H1 (cell line): ENCODE measurements at regions of chr3 and their contacts with region 1.

Region 1: DNA sequence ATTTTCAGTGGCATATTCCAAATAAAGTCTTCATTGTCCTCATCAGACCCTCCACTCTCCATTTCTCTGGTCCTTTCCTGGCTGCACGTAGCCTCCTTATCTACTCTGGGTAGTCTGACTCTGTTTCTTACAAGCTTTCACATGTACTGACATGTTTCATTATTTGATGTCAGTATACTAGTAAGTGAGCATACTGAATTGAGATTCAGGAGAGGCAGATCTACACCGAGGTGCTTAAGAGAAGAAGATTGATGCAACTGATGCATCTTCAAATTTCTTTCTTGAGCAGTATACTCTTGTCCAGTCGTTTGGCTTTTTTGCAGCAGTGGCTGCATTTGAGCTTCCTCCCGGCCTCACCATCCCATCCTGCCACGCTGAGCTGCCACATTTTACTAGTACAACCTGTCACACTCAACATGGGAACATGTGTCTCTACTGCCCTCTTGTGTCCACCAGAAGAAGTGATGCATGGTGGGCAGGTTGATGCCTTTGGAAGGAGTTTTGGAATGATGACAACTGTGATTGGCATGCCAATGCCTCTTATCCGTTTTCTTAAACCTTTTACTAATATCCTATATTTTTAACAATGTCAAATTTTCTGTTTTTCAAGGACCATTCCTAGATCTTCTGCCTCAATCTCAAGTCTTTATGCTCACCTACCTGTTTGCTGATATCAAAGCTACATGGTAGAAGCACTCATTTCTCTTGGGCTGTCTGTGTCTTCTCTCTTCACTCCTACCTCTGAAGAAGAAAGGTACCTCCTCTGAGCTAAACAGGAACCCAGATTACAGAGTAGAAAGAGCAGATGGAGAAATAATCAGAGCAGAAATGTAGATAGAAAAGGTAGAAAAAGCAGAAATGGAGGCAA is 38.7 kb downstream of the GUCA1C start:
- DNase-seq: peak; percentile 21 to 63
- H3K4me3 ChIP-seq: no peak overlapping the region
- H3K27ac ChIP-seq: no peak overlapping the region
- H3K4me1 ChIP-seq: no peaks in the 10 kb centered on the region
- H3K27me3 ChIP-seq: no peaks in the 10 kb centered on the region
- CTCF ChIP-seq: peak; percentile 65 to 97 (median 88)
- EP300 ChIP-seq: no peak
- POLR2A ChIP-seq: no peak
- RAD21 ChIP-seq: peak; percentile 97

Region 2: GRCh38 chr3:108662130-108662738 is 252.8 kb before region 1 on chr3:
- CTCF ChIA-PET with region 1: interaction called, 23 read pairs
- POLR2A ChIA-PET with region 1: no interaction called
- DNase-seq: no peak
- H3K4me3 ChIP-seq: no peak overlapping the region
- H3K27ac ChIP-seq: no peak overlapping the region
- H3K4me1 ChIP-seq: peaks cover 0 to 2% (median 0%) of the 10 kb centered on the region in 4 experiments; a peak in 2 of 7 replicates
- H3K27me3 ChIP-seq: no peaks in the 10 kb centered on the region
- CTCF ChIP-seq: peak in 2 of 3 experiments; percentile 61 to 65; a peak in 3 of 4 replicates
- EP300 ChIP-seq: no peak
- POLR2A ChIP-seq: no peak
- RAD21 ChIP-seq: peak; percentile 83 to 87

Region 3: DNA sequence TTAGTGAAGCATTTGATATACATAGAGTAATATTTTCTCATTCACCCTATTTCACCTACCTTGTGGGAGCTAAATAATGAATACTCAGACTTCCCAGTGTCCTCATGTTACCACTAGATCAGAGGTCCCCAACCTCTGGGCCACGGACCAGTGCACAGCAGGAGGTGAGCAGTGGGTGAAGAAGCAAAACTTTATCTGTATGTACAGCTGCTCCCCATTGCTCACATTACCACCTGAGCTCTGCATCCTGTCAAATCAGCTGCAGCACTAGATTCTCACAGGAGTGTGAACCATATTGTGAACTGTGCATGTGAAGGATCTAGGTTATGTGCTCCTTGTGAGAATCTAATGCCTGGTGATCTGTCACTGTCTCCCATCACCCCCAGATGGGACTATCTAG is 237.2 kb before region 1 on chr3:
- CTCF ChIA-PET with region 1: interaction called, 11 read pairs
- POLR2A ChIA-PET with region 1: no interaction called
- DNase-seq: no peak
- H3K4me3 ChIP-seq: no peak overlapping the region
- H3K27ac ChIP-seq: no peak overlapping the region
- H3K4me1 ChIP-seq: no peaks in the 10 kb centered on the region
- H3K27me3 ChIP-seq: no peaks in the 10 kb centered on the region
- CTCF ChIP-seq: no peak
- EP300 ChIP-seq: no peak
- POLR2A ChIP-seq: no peak
- RAD21 ChIP-seq: no peak

Region 4: GRCh38 chr3:108818404-108818803 is 96.6 kb before region 1 on chr3:
- CTCF ChIA-PET with region 1: interaction called, 12 read pairs
- POLR2A ChIA-PET with region 1: no interaction called
- DNase-seq: peak in 1 of 2 experiments; percentile 34
- H3K4me3 ChIP-seq: no peak overlapping the region
- H3K27ac ChIP-seq: no peak overlapping the region
- H3K4me1 ChIP-seq: no peaks in the 10 kb centered on the region
- H3K27me3 ChIP-seq: no peaks in the 10 kb centered on the region
- CTCF ChIP-seq: peak; percentile 30 to 81 (median 65); a peak in 3 of 4 replicates
- EP300 ChIP-seq: no peak
- POLR2A ChIP-seq: no peak
- RAD21 ChIP-seq: peak; percentile 84 to 89

Region 5: DNA sequence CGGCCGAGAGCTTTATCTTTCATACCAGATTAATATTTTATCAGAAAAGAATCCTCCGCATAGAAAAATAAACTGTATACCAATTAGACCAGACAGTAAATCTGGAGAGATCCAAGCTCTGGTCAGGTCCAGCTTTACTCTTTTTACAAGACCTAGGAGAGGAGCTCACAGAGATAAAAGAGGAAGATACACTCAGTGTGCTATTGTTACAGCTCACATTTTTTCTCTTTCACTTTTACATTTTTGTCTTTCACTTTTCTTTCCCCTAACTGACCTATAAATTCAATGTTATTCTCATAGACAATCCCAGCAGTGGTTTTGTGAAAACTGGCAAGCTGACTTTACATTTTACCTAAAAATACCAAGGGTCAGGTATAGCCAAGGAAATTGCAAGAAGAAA is 17.1 kb before region 1 on chr3:
- CTCF ChIA-PET with region 1: interaction called, 12 read pairs
- POLR2A ChIA-PET with region 1: no interaction called
- DNase-seq: no peak
- H3K4me3 ChIP-seq: no peak overlapping the region
- H3K27ac ChIP-seq: no peak overlapping the region
- H3K4me1 ChIP-seq: no peaks in the 10 kb centered on the region
- H3K27me3 ChIP-seq: no peaks in the 10 kb centered on the region
- CTCF ChIP-seq: no peak
- EP300 ChIP-seq: no peak
- POLR2A ChIP-seq: no peak
- RAD21 ChIP-seq: no peak

Region 6: GRCh38 chr3:108959017-108959416 is 44.0 kb after region 1 on chr3:
- CTCF ChIA-PET with region 1: interaction called, 10 read pairs
- POLR2A ChIA-PET with region 1: no interaction called
- DNase-seq: no peak
- H3K4me3 ChIP-seq: no peak overlapping the region
- H3K27ac ChIP-seq: no peak overlapping the region
- H3K4me1 ChIP-seq: no peaks in the 10 kb centered on the region
- H3K27me3 ChIP-seq: no peaks in the 10 kb centered on the region
- CTCF ChIP-seq: no peak
- EP300 ChIP-seq: no peak
- POLR2A ChIP-seq: no peak
- RAD21 ChIP-seq: no peak

Region 7: GRCh38 chr3:108970561-108970960 is 55.6 kb after region 1 on chr3:
- CTCF ChIA-PET with region 1: no interaction called
- POLR2A ChIA-PET with region 1: no interaction called
- DNase-seq: no peak
- H3K4me3 ChIP-seq: no peak overlapping the region
- H3K27ac ChIP-seq: no peak overlapping the region
- H3K4me1 ChIP-seq: no peaks in the 10 kb centered on the region
- H3K27me3 ChIP-seq: no peaks in the 10 kb centered on the region; a peak in 1 of 7 replicates
- CTCF ChIP-seq: no peak
- EP300 ChIP-seq: no peak
- POLR2A ChIP-seq: no peak
- RAD21 ChIP-seq: no peak

Region 8: GRCh38 chr3:109081746-109082510 is 166.9 kb after region 1 on chr3:
- CTCF ChIA-PET with region 1: no interaction called
- POLR2A ChIA-PET with region 1: no interaction called
- DNase-seq: peak; percentile 31 to 62
- H3K4me3 ChIP-seq: no peak overlapping the region
- H3K27ac ChIP-seq: no peak overlapping the region
- H3K4me1 ChIP-seq: peaks cover 0 to 3% (median 0%) of the 10 kb centered on the region in 4 experiments; a peak in 3 of 7 replicates
- H3K27me3 ChIP-seq: no peaks in the 10 kb centered on the region
- CTCF ChIP-seq: peak in 2 of 3 experiments; percentile 64 to 80; a peak in 3 of 4 replicates
- EP300 ChIP-seq: no peak
- POLR2A ChIP-seq: no peak
- RAD21 ChIP-seq: peak; percentile 90 to 95